ENCODE measurements at regions of chr11 and their contacts with region 1.

Region 1: GRCh38 chr11:22130462-22131053 is 62.3 kb upstream of the ANO5 start:
- DNase-seq: no peak
- ATAC-seq: peak; percentile 57 to 81 (median 74)
- H3K4me3 ChIP-seq: no peak overlapping the region
- H3K27ac ChIP-seq: no peak overlapping the region
- H3K4me1 ChIP-seq: no peaks in the 10 kb centered on the region
- H3K27me3 ChIP-seq: no peaks in the 10 kb centered on the region
- CTCF ChIP-seq: peak; percentile 64

Region 2: GRCh38 chr11:20658135-20658534 is 1472.4 kb before region 1 on chr11:
- intact Hi-C with region 1: loop called in 1 of 2 experiments (anchors 10 kb)
- DNase-seq: no peak
- ATAC-seq: no peak
- H3K4me3 ChIP-seq: no peak overlapping the region
- H3K27ac ChIP-seq: no peak overlapping the region
- H3K4me1 ChIP-seq: no peaks in the 10 kb centered on the region
- H3K27me3 ChIP-seq: peaks cover 0 to 23% (median 0%) of the 10 kb centered on the region in 3 donors
- CTCF ChIP-seq: no peak

Region 3: DNA sequence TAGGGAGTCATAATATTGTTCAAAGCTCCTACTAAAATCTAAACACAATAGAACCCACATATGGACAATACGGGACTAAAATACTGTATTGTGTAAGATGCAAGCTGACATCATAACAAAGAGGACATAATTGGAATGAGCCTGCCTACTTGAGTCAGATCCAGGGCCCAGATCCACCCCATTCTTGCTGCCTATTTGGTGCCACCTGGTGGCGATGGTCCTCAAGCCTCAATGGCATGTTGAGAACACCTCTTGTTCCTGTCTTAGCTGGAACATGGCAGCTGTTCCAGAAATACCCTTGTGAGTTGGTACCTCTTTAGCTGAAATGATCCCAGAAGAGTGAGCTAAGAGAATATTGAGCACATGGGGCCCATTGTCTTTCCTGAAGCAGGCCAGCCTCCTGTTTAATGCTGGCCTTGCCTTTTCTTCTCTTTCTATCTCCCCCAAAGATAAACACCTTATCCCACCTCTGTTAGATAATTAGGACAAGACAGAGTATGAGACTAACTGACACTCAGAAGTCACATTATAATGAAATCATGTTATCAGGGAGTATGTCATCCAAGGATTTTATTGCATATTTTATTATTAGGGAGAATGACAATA is 618.6 kb before region 1 on chr11:
- intact Hi-C with region 1: loop called in 1 of 2 experiments (anchors 10 kb)
- DNase-seq: peak; percentile 23 to 53
- ATAC-seq: no peak
- H3K4me3 ChIP-seq: no peak overlapping the region
- H3K27ac ChIP-seq: no peak overlapping the region
- H3K4me1 ChIP-seq: no peaks in the 10 kb centered on the region
- H3K27me3 ChIP-seq: no peaks in the 10 kb centered on the region
- CTCF ChIP-seq: peak; percentile 28

Region 4: DNA sequence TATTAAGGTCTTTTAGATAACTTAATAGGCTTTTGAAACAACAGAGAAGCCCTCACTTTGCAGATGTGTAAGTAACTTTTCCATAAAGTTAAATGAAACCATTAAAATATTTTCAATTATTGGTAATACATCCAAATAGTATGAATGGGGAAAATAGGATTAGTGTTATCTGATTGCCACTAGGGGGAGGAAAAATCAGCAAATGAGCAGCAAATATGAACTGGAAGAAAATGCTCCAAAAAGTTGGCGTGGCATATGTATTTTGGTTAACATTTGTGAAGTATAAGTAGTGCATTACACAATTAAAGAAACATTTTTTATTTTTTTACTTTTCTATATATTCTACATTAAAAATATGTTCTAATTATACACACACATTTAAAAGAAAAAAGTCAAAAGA is 197.5 kb before region 1 on chr11:
- intact Hi-C with region 1: loop called (anchors 1 to 5 kb)
- DNase-seq: no peak
- ATAC-seq: no peak
- H3K4me3 ChIP-seq: no peak overlapping the region
- H3K27ac ChIP-seq: no peak overlapping the region
- H3K4me1 ChIP-seq: no peaks in the 10 kb centered on the region
- H3K27me3 ChIP-seq: no peaks in the 10 kb centered on the region
- CTCF ChIP-seq: peak; percentile 53

Region 5: GRCh38 chr11:22049276-22049675 is 81.3 kb before region 1 on chr11:
- intact Hi-C with region 1: no loop called
- DNase-seq: no peak
- ATAC-seq: no peak
- H3K4me3 ChIP-seq: no peak overlapping the region
- H3K27ac ChIP-seq: no peak overlapping the region
- H3K4me1 ChIP-seq: no peaks in the 10 kb centered on the region
- H3K27me3 ChIP-seq: no peaks in the 10 kb centered on the region
- CTCF ChIP-seq: no peak

Region 6: DNA sequence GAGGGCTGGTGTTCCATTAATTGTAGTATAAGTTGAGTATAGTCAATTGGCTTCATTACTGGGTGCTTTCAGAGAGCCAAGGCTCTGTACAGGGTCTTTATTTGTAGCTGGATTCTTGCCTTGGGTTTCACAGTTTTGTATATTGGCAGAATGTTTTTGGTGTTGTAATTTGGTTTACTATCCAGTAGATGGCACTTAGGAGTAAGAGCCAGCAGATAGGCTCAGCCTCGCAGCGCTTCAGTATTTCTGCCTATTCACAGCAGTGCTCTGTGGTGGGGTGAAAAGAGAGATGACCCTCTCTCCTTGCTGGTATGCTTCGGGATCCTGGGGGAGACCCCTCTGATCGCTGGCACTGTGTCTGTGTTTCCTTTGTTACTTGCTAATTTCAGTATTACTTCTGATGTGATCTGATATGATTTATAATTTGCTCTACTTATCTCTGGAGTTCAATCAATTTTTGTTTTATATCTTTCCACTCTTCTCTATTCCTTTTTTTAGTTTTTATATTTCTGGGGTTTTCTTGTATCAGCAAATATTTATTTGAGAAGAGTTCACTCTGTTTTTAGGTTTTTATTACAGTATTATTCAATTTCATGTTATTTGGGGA is 114.5 kb after region 1 on chr11:
- intact Hi-C with region 1: no loop called
- DNase-seq: peak; percentile 10 to 50
- ATAC-seq: peak; percentile 57 to 97 (median 86)
- H3K4me3 ChIP-seq: no peak overlapping the region
- H3K27ac ChIP-seq: peak overlapping the region; percentile 33
- H3K4me1 ChIP-seq: no peaks in the 10 kb centered on the region
- H3K27me3 ChIP-seq: no peaks in the 10 kb centered on the region
- CTCF ChIP-seq: peak; percentile 56